ENCODE measurements at regions of chr4 and their contacts with region 1.

Region 1: DNA sequence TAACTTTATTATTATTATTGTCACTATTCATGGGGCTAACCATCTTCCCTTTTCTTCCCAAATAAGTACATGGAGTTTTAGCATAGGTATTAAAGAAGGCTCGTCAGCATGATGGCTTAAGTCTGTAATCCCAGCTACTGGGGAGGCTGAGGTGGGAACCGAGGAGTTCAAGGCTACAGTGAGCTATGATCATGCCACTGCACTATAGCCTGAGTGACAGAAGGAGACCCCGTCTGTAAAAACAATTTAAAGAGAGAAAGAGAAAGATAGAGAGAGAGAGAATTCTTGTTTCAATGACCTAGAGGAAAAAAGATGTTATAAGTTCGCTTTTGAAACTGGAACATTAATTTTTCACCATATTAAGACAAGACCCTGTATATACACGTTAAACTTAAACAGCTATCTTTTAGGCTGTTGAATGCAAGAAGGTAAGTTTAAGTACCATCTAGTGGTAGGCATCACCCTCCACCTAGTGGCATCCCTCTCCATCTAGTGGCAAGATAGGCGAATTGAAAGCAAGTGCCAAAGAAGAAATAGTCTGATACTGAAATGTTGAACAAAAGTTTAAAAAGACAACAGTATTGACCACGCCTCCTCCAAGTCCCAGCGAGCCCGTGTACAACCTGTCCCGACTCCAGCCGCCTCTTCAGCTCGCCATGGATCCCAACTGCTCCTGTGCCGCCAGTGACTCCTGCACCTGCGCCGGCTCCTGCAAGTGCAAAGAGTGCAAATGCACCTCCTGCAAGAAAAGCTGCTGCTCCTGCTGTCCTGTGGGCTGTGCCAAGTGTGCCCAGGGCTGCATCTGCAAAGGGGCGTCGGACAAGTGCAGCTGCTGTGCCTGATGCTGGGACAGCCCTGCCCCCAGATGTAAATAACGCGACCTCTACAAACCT is 26.0 kb upstream of the YTHDC1 start:
- DNase-seq: peak in 1 of 5 donors; percentile 11
- ATAC-seq: peak in 3 of 4 donors; percentile 59 to 69 (median 67)
- H3K4me3 ChIP-seq: no peak overlapping the region
- H3K27ac ChIP-seq: no peak overlapping the region
- H3K4me1 ChIP-seq: peaks cover 0 to 4% (median 0%) of the 10 kb centered on the region in 12 donors
- H3K27me3 ChIP-seq: peaks cover 0 to 43% (median 3%) of the 10 kb centered on the region in 9 donors
- CTCF ChIP-seq: peak; percentile 60 to 83 (median 71)
- POLR2A ChIP-seq: no peak

Region 2: DNA sequence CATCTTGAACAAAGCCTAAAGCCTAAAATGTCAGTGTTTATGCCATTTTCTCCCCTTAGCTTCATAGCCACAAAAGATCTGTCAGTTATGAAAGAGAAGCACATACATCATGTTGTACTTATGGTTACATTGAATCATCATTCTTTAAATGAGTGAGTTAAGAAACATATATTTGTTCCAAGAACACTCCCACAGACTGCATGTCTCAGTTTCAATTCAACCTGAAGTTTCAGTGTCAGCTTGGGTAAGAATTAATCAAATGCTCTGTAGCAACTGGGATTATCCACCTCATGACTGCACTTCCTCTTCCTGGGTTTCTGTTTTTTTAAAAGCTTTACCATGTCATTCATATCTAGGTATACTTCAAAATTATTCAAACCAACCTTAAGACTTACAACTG is 126.5 kb before region 1 on chr4:
- intact Hi-C with region 1: no loop called
- DNase-seq: no peak
- ATAC-seq: no peak
- H3K4me3 ChIP-seq: no peak overlapping the region
- H3K27ac ChIP-seq: no peak overlapping the region
- H3K4me1 ChIP-seq: no peaks in the 10 kb centered on the region
- H3K27me3 ChIP-seq: no peaks in the 10 kb centered on the region
- CTCF ChIP-seq: no peak
- POLR2A ChIP-seq: no peak

Region 3: DNA sequence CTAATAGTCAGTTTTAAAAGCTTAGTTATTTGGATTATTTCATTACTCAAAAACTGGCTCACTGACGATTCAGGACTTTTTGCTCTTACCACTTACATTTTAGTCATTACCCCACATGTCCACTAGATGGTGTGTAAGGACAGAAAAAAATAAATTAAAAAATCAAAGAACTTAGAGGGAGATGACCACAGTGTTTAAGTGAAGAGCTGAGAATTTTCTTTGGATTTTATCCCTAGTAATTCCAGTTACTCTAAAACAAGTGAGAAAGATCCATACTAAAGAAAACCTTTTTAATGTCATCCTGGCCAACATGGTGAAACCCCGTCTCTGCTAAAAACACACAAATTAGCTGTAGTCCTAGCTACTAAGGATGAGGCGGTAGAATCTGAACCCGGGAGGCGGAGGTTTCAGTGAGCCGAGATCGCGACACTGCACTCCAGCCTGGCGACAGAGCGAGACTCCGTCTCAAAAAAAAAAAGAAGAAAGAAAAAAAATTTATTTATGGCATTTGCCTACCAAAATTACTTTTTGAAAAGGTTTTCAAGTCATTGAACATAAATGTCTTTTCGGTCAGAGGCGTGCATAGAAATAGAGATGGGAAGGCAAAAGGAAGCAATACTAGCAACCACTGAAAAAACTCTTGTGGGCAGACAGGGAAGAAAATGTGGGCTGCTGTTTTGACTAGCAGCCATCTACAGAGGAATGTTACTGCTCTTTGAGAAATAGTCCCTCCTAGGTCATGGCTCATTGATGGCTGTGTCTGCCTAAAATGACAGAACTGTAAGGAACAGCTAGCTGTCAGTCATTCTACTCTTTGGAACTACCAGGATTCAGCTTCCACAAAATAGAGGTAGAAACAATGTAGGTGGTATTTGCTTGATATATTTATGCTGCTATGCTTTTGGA is 103.8 kb before region 1 on chr4:
- intact Hi-C with region 1: loop called (anchors 1 to 2 kb)
- DNase-seq: no peak
- ATAC-seq: peak in 1 of 4 donors; percentile 78
- H3K4me3 ChIP-seq: peak overlapping the region in 8 of 12 donors; percentile 5 to 35 (median 19)
- H3K27ac ChIP-seq: no peak overlapping the region
- H3K4me1 ChIP-seq: peaks cover 0 to 6% (median 0%) of the 10 kb centered on the region in 12 donors
- H3K27me3 ChIP-seq: no peaks in the 10 kb centered on the region
- CTCF ChIP-seq: peak; percentile 60 to 83 (median 77)
- POLR2A ChIP-seq: no peak

Region 4: GRCh38 chr4:68319040-68319439 is 56.9 kb before region 1 on chr4:
- intact Hi-C with region 1: loop called in 1 of 10 experiments (anchors 10 kb)
- DNase-seq: no peak
- ATAC-seq: no peak
- H3K4me3 ChIP-seq: no peak overlapping the region
- H3K27ac ChIP-seq: no peak overlapping the region
- H3K4me1 ChIP-seq: no peaks in the 10 kb centered on the region
- H3K27me3 ChIP-seq: no peaks in the 10 kb centered on the region
- CTCF ChIP-seq: no peak
- POLR2A ChIP-seq: no peak

Region 5: GRCh38 chr4:68349649-68350360 is 26.1 kb before region 1 on chr4 and contains the start of gene YTHDC1:
- intact Hi-C with region 1: loop called in 1 of 10 experiments (anchors 2 kb)
- DNase-seq: peak; percentile 97 to 98 (median 97)
- ATAC-seq: peak; percentile 99 to 100 (median 100)
- H3K4me3 ChIP-seq: peak within 1 kb of the TSS; percentile 69 to 96 (median 88)
- H3K27ac ChIP-seq: peak within 1 kb of the TSS; percentile 83 to 99 (median 98)
- H3K4me1 ChIP-seq: peaks cover 3 to 42% (median 34%) of the 10 kb centered on the region in 12 donors
- H3K27me3 ChIP-seq: no peaks in the 10 kb centered on the region
- CTCF ChIP-seq: peak in 1 of 12 donors; percentile 5
- POLR2A ChIP-seq: peak; percentile 75 to 81
- total RNA-seq, gene YTHDC1: 27.0 to 60.8 (median 43.8) TPM

Measured in heart left ventricle (tissue), 16 donors.